Dorsolateral prefrontal cortex (tissue), 120 donors: ENCODE measurements at regions of chr2 and their contacts with region 1.

Region 1: DNA sequence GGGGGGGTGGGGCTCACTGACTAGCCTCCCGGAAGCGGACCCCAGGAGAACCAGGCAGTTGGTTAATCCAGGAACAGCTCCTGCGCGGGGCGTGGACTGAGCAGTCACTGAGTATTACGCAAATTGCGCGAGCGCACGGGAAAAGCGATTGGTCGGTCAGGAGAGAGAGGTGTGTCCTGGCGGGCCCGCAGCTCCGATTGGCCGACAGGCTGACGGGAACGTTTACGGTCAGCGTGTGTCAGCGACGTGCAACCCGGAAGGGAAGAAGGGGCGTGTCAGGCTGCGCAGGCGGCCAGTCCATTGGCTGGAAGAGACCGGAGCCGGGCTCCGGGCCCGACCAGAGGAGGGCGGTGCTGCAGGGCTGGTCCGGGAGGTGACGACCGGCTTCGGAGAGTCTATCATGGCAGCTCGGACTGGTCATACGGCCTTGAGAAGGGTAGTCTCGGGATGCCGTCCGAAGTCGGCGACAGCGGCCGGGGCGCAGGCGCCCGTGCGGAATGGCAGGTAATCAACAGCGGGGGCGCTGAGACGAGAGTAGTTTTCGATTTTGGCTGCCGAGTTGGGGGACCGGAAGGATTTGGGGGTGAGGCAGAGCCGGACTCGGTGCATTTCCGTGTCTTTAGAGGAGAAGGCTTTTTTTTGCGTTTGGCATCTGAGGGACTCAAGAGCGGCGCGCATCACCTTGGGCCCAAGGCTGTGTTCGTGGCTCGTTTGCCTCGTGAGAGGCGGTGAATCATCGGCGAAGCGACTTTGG is at the start of gene COQ10B:
- DNase-seq: peak; percentile 99 to 100 (median 100)
- H3K4me3 ChIP-seq: peak within 1 kb of the TSS; percentile 71 to 100 (median 93)
- H3K27ac ChIP-seq: peak within 1 kb of the TSS; percentile 73 to 100 (median 97)
- H3K27me3 ChIP-seq: no peaks in the 10 kb centered on the region
- CTCF ChIP-seq: peak in 55 of 56 donors; percentile 29 to 82 (median 59)
- total RNA-seq, gene COQ10B: 13.4 to 37.1 (median 27.3) TPM

Region 2: DNA sequence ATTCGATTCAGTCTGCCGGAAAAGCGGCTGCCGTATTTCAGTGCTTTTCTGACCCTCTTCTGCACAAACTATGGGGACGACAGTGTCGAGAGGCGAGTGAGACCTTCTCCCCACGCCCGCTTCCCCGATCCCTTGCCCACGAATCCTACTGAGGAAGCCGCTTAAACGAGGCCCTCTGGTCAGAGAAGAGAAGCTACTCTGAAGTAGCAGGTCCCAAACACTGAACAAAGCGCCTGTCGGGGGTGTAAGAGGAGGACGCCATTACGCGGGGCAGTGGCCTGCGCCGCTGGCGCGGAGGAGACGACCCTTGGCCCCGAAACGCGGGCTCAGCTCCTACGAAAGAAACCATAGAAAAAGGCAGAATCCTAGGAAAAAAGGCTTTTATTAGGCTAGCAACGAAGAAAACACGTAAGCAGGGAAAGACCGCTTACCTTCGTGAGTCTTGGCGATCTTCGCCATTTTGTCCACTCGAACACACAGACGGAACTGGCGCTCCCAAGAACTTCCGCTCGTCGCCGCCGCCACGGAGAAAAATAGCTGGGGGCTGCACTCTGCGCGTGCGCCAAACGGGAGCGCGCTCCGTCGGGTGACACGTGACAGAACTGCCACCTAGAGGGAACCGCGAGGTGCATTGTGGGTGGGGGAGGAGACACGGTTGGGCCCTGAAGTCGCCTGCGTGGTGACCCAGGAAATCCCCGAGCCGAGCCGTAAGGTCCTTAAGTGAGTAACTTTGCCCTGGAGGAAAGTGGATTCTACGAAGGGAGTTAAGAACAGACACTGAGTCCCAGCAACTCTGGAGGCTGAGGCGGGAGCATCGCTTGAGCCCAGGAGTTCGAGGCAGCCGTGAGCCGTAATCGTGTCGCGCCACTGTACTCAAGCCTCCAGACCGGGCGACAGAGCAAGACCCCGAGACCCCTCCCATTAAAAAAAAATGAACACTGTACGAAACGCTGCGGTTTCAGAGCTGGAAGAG is 18.5 kb before region 1 on chr2 and contains the start of gene SF3B1:
- intact Hi-C with region 1: loop called (anchors 1 to 2 kb)
- DNase-seq: peak; percentile 96 to 99 (median 98)
- H3K4me3 ChIP-seq: peak within 1 kb of the TSS; percentile 52 to 100 (median 92)
- H3K27ac ChIP-seq: peak within 1 kb of the TSS; percentile 81 to 99 (median 96)
- H3K27me3 ChIP-seq: no peaks in the 10 kb centered on the region
- CTCF ChIP-seq: peak in 46 of 56 donors; percentile 7 to 65 (median 33)
- total RNA-seq, gene SF3B1: 151 to 275 (median 208) TPM

Region 3: DNA sequence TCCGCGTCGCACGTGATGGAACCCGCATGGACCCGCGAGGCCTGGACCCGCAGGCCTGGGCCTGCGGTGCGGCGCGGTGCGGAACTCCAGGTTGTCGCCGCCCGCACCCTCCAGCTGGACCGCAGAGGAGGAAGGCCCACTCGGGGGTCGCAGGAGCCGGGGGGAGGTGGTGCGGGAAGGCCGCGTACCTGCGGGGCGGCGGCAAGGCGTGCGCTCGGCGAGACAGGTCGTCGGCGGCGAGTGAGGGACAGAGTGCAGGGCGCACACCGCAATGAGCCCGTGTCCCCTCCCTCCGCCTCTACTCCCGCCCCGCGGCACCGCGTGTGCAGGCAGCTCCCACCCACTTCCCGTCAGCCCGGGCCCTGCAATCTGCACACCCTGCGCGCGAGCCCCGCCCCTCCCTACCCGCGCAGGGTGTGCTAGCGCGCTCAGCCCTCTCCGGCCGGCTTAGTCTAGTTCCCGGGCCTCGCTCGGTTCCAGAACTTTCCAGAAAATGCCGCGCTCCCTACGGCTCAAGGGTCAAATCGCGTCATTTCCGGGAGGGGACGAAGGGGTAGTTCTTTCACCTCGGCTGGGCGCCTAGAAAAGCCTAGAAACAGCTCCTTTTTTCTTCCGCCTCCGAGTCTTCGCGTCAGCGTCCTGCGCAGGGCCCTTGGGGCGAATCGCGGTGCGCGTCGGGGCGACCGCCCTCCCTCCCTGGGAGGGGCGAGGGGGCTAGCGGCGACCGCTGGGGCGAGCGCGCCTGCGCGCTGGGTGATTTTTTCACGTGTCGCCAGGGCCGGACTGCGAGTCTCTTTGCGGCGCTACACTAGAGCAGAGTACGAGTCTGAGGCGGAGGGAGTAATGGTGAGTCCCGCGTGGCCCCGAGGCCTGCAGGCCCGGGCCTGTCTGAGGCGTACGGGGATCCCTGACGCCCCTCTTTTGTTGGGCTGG is 46.5 kb after region 1 on chr2 and contains the starts of genes HSPD1 and HSPE1:
- intact Hi-C with region 1: loop called (anchors 2 to 5 kb)
- DNase-seq: peak; percentile 95 to 99 (median 97)
- H3K4me3 ChIP-seq: peak within 1 kb of the TSS; percentile 65 to 100 (median 92)
- H3K27ac ChIP-seq: peak within 1 kb of the TSS; percentile 96 to 100 (median 100)
- H3K27me3 ChIP-seq: no peaks in the 10 kb centered on the region
- CTCF ChIP-seq: peak in 17 of 56 donors; percentile 3 to 30 (median 10)
- total RNA-seq, gene HSPD1: 104 to 555 (median 149) TPM
- total RNA-seq, gene HSPE1: 54.9 to 298 (median 81.8) TPM

Region 4: DNA sequence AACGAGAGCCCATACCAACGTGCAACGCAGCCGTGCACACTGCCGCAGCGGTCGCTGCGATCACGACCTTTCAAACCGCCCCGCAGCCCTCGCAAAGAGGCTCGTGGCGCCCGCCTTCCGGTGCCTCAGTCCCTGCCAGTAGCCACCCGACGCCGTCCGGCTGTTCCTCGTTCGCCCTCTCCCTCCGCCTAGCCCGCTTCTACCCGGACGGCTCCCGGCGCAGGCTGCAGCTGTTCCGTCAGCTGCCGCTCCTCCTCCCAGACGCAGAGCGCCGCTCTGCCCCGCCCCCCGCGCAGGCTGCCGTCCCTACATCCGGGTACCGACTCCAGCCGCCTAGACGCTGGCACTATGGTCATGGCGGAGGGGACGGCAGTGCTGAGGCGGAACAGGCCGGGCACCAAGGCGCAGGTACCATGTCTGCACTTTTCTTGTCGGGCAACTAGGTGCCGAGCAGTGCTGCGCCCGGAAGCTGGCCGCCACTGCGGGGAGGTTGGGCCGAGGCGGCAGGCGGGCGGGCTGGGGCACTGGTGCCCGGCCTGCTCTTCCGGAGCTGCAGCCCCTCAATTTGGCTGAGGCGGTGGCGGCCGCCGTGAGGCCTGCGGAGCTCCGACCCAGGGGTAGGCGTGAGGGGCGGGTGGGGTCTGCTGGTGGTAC is 62.5 kb after region 1 on chr2 and contains the start of gene MOB4:
- intact Hi-C with region 1: loop called in 1 of 2 experiments (anchors 2 kb)
- DNase-seq: peak; percentile 84 to 96 (median 92)
- H3K4me3 ChIP-seq: peak within 1 kb of the TSS; percentile 67 to 100 (median 92)
- H3K27ac ChIP-seq: peak within 1 kb of the TSS; percentile 86 to 100 (median 98)
- H3K27me3 ChIP-seq: no peaks in the 10 kb centered on the region
- CTCF ChIP-seq: peak in 43 of 56 donors; percentile 12 to 56 (median 38)
- total RNA-seq, gene MOB4: 12.8 to 47.5 (median 26.2) TPM

Region 5: DNA sequence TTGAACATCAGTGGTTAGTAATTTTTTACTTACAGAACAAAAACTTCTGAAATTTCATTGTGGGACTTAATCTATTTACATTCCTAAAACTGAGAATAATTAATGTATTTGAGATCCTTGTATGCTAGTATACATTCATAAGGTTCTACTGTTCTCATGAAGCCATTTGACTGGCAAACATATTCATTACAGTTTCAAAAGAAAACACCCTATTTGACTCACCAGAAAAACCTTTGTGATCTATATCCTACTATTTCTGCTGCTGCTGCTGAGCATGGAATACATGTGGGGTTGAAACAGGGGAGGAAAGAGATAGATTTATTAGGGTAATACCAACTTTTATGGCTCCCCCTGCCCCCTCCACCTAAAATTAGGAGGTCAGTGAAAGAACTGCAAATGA is 273.7 kb after region 1 on chr2:
- intact Hi-C with region 1: no loop called
- DNase-seq: no peak
- H3K4me3 ChIP-seq: no peak overlapping the region
- H3K27ac ChIP-seq: no peak overlapping the region
- H3K27me3 ChIP-seq: no peaks in the 10 kb centered on the region
- CTCF ChIP-seq: no peak

Region 6: GRCh38 chr2:197777823-197778407 is 324.6 kb after region 1 on chr2:
- intact Hi-C with region 1: loop called in 1 of 2 experiments (anchors 5 kb)
- DNase-seq: no peak
- H3K4me3 ChIP-seq: no peak overlapping the region
- H3K27ac ChIP-seq: no peak overlapping the region
- H3K27me3 ChIP-seq: no peaks in the 10 kb centered on the region
- CTCF ChIP-seq: peak; percentile 61 to 93 (median 80)